PC-3 (cell line): ENCODE measurements at regions of chr9 and their contacts with region 1.

Region 1: GRCh38 chr9:90102292-90102901 is 497.6 kb downstream of the GADD45G start:
- DNase-seq: peak; percentile 80
- ATAC-seq: peak; percentile 92
- H3K4me3 ChIP-seq: no peak overlapping the region
- H3K27ac ChIP-seq: no peak overlapping the region
- H3K4me1 ChIP-seq: no peaks in the 10 kb centered on the region
- H3K27me3 ChIP-seq: no peaks in the 10 kb centered on the region
- CTCF ChIP-seq: peak; percentile 74

Region 2: DNA sequence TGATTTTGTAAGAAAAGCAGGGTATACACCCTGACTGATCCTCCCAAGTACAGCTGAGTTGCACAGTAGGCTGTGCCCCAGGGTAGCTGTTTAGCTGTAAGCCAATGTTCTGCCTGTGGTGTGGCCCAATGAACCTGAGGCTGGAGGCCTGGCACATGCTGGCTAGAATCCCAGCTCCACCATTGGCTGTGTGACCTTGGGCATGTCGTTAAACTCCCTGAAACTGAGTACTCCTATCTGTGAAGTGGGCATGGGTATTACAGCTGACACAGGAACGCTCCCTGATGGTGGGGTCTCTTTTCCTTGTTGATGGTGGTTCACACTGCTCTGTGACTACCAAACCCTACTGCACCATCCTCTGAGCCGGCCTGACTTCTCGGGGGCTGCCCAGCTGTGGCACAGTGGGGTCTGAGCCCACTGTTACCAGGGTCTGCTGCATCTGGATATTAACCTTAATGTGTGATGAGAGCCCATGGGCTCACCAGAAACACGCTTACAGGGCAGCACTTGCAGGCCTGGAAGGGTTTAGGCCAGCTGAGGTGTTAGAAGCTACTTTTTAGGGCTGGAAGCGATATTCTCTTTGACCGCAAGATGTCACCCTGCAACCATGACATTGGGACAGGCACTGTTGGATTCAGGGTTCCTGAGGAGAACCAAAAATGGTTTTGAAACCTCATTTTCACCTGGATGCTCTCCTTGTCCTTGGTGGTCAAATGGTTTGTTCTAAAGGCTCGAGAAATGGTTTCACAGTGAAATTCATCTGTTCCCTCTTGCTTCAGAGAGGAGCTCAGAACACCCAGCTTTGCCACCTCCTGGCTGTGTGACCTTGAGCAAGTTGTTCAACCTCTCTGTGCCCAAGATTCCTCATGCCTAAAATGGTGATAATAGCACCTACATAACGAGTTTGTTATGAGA is 504.4 kb before region 1 on chr9:
- CTCF ChIA-PET with region 1: interaction called, 8 read pairs
- POLR2A ChIA-PET with region 1: no interaction called
- intact Hi-C with region 1: loop called (anchors 1 kb)
- DNase-seq: peak; percentile 71
- ATAC-seq: peak; percentile 78; the same call in 1 of the 2 replicates
- H3K4me3 ChIP-seq: no peak overlapping the region
- H3K27ac ChIP-seq: no peak overlapping the region
- H3K4me1 ChIP-seq: no peaks in the 10 kb centered on the region
- H3K27me3 ChIP-seq: peaks cover 25% of the 10 kb centered on the region
- CTCF ChIP-seq: peak; percentile 77

Region 3: DNA sequence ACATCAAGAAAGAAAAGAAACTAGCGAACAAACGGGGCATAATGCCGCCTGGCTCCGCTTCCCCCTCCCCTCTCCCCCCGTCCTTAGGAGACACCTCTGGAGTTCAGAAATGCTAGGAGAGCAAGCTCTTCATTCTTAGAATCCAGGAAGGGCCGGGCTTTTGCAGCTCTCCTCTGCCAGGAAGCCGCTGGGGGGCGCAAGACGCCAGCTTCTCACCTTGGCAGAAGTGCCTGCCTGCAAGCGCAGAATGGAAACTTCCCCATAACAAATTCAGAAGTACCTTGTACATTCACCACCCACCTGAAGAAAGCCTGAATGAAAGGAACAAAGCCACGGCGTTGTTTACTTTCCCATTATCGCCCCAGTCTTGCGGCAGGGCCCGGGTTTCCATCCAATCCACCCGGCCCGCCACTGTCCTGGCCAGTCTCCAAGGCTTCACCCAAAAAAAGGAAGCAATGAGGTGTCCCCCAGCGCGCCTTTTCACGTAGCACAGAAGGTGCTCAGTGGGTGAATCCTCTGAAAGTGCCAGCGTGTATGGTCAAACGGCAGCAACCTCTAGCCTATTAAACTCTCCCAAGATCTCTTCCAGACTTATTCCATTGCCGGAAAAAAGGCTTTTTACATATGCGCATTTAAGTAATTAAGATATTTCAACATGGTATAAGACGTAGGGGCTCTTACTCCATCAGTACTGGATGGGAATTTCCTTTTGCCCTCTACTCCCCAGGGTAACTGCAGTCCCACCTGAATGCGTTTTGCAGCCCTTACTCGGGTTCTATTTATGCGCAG is 499.2 kb before region 1 on chr9:
- CTCF ChIA-PET with region 1: interaction called, 8 read pairs
- POLR2A ChIA-PET with region 1: no interaction called
- intact Hi-C with region 1: loop called (anchors 1 kb)
- DNase-seq: peak; percentile 79
- ATAC-seq: peak; percentile 8; the same call in 1 of the 2 replicates
- H3K4me3 ChIP-seq: peak overlapping the region; percentile 32; the same call in 1 of the 2 replicates
- H3K27ac ChIP-seq: no peak overlapping the region
- H3K4me1 ChIP-seq: peaks cover 18% of the 10 kb centered on the region
- H3K27me3 ChIP-seq: peaks cover 30% of the 10 kb centered on the region
- CTCF ChIP-seq: peak; percentile 82